ENCODE measurements at regions of chr13 and their contacts with region 1.

Region 1: DNA sequence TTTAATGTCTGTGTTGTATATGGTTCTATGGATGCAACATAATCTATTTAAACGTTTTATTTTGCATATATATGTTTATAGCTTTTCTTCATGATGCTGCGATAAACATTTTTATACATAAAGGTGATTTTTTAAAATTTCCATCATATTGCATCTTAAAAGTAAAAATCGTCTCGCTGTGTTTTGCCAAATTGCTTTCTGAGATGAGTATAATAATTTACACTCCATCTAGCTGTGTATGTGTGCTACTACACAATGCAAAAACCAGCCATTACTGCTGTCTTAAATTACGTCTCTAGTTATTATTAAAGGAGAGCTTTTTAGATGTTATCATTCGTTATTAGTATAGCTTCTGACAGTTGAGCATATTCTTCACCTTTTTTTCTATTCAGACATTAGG is 37.2 kb downstream of the METTL21C start:
- DNase-seq: peak in 1 of 9 donors; percentile 5
- ATAC-seq: no peak
- H3K4me3 ChIP-seq: no peak overlapping the region
- H3K4me3 Mint-ChIP-seq: no peak overlapping the region
- H3K27ac ChIP-seq: no peak overlapping the region
- H3K27ac Mint-ChIP-seq: no peak overlapping the region
- H3K4me1 ChIP-seq: no peaks in the 10 kb centered on the region
- H3K4me1 Mint-ChIP-seq: peaks cover 0 to 6% (median 0%) of the 10 kb centered on the region in 7 donors
- H3K27me3 ChIP-seq: no peaks in the 10 kb centered on the region
- H3K27me3 Mint-ChIP-seq: no peaks in the 10 kb centered on the region

Region 2: GRCh38 chr13:102620516-102620915 is 37.1 kb before region 1 on chr13:
- CTCF ChIA-PET with region 1: interaction called, 7 read pairs
- POLR2A ChIA-PET with region 1: no interaction called
- intact Hi-C with region 1: loop called in 1 of 2 experiments (anchors 5 kb)
- DNase-seq: no peak
- ATAC-seq: no peak
- H3K4me3 ChIP-seq: no peak overlapping the region
- H3K4me3 Mint-ChIP-seq: no peak overlapping the region
- H3K27ac ChIP-seq: no peak overlapping the region
- H3K27ac Mint-ChIP-seq: peak overlapping the region in 1 of 9 donors; percentile 26
- H3K4me1 ChIP-seq: no peaks in the 10 kb centered on the region
- H3K4me1 Mint-ChIP-seq: peaks cover 0 to 23% (median 8%) of the 10 kb centered on the region in 7 donors
- H3K27me3 ChIP-seq: no peaks in the 10 kb centered on the region
- H3K27me3 Mint-ChIP-seq: no peaks in the 10 kb centered on the region

Region 3: DNA sequence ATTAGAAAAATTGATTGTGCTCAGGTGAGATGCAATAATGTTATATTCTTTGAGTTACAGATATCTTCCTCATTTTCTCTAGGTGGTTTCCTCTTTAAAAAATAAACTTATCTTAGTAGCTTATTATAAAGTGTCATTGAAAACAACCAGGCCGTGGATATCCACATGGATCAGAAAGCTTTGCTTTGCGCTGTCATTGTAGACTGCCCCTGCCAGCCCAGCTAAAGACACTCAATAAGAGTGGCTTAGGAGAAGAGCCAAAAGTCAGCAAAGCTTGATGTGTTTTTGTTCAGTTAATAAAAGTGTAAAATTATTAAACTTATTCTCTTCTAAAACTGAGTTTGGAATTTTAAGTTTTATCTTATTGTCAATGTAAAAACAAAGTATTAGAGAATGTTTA is 26.4 kb before region 1 on chr13:
- CTCF ChIA-PET with region 1: no interaction called
- POLR2A ChIA-PET with region 1: no interaction called
- intact Hi-C with region 1: no loop called
- DNase-seq: no peak
- ATAC-seq: no peak
- H3K4me3 ChIP-seq: no peak overlapping the region
- H3K4me3 Mint-ChIP-seq: no peak overlapping the region
- H3K27ac ChIP-seq: no peak overlapping the region
- H3K27ac Mint-ChIP-seq: no peak overlapping the region
- H3K4me1 ChIP-seq: no peaks in the 10 kb centered on the region
- H3K4me1 Mint-ChIP-seq: peaks cover 0 to 4% (median under 1%) of the 10 kb centered on the region in 7 donors
- H3K27me3 ChIP-seq: no peaks in the 10 kb centered on the region
- H3K27me3 Mint-ChIP-seq: no peaks in the 10 kb centered on the region